A549 (cell line): ENCODE measurements at regions of chr2 and their contacts with region 1.

Region 1: GRCh38 chr2:20595431-20596192 is 55.3 kb downstream of the HS1BP3 start:
- DNase-seq: no peak
- ATAC-seq: no peak
- H3K4me3 ChIP-seq: no peak overlapping the region
- H3K27ac ChIP-seq: peak overlapping the region; percentile 75 to 89; a peak in 4 of 6 replicates
- H3K4me1 ChIP-seq: peaks cover 55% of the 10 kb centered on the region
- CTCF ChIP-seq: no peak
- EP300 ChIP-seq: no peak
- POLR2A ChIP-seq: no peak
- RAD21 ChIP-seq: no peak

Region 2: DNA sequence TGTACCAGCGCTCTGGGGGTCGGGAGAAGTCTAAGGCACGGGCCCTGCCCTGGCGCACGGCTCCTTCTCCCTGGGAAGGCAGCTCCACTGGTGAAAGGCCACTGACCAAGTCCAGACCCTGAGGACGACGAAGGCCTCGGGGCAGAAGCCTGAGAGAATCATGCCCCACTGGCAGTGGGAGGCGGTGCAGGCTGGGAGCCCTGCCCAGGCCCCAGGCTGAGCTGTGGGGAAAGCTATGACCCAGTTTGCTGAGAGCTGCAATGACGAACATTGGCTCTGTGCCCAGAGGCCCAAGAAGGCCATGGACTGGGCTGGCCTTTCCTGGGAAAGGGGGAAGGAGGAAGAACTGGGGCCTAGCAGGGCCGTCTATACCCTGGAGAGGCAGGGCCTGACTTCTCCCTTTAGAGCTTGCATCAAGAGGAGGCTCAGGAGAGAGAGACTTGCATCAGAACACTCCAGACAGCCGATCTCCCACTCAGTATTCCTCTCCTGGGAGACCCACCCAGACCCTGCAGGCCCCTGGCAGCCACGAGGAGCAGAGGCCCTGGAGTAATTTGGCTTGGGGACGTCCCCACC is 22.4 kb after region 1 on chr2:
- CTCF ChIA-PET with region 1: interaction called, 112 read pairs
- POLR2A ChIA-PET with region 1: no interaction called
- DNase-seq: peak; percentile 90 to 95
- ATAC-seq: peak; percentile 87 to 94
- H3K4me3 ChIP-seq: no peak overlapping the region
- H3K27ac ChIP-seq: peak overlapping the region; percentile 89 to 90
- H3K4me1 ChIP-seq: peaks cover 26% of the 10 kb centered on the region
- CTCF ChIP-seq: no peak
- EP300 ChIP-seq: no peak; a peak in 1 of 5 replicates
- POLR2A ChIP-seq: peak; percentile 24; the same call in 1 of the 2 replicates
- RAD21 ChIP-seq: peak; percentile 21 to 30; a peak in 3 of 5 replicates

Region 3: GRCh38 chr2:20796374-20796791 is 200.8 kb after region 1 on chr2:
- CTCF ChIA-PET with region 1: no interaction called
- POLR2A ChIA-PET with region 1: no interaction called
- DNase-seq: peak in 1 of 2 experiments; percentile 7
- ATAC-seq: no peak
- H3K4me3 ChIP-seq: no peak overlapping the region
- H3K27ac ChIP-seq: no peak overlapping the region
- H3K4me1 ChIP-seq: peaks cover 6% of the 10 kb centered on the region; the same call in 2 of the 3 replicates
- CTCF ChIP-seq: no peak
- EP300 ChIP-seq: no peak
- POLR2A ChIP-seq: no peak
- RAD21 ChIP-seq: no peak